Naive thymus-derived CD4-positive, alpha-beta T cell (primary cell): ENCODE measurements at regions of chr10 and their contacts with region 1.

Region 1: DNA sequence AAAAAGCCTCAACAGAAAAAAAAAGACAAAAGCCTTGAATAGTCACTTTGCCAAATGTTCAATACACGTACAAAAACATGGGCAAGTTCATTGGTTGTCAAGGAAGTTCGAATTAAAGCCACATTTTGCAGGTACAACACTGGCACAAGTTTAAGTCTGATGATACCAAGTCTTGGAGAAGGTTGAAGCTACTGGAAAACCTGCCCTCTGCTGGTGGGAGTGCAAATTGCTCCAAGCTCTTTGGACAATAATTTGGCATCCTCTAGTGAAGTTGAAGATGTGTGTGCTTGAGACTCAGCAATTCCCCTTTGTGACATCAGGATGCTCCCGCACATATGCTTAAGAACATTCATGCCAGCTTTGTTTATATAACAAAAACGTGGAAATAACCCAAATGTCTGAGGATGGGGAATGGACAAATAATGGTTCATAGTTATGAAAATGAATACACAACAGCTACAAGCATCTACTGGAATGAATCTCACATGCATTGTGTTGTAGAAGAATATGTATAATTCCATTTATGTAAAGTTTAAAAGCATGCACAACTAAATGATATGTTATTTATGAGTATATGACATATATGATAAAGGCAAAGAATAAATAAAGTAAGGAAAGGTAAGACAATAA is 120.0 kb upstream of the PLPP4 start:
- DNase-seq: peak in 6 of 9 donors; percentile 24 to 39 (median 28)
- ATAC-seq: peak; percentile 46
- H3K4me3 ChIP-seq: no peak overlapping the region
- H3K4me3 Mint-ChIP-seq: no peak overlapping the region
- H3K27ac ChIP-seq: no peak overlapping the region
- H3K27ac Mint-ChIP-seq: no peak overlapping the region
- H3K4me1 ChIP-seq: no peaks in the 10 kb centered on the region
- H3K4me1 Mint-ChIP-seq: no peaks in the 10 kb centered on the region
- H3K27me3 ChIP-seq: no peaks in the 10 kb centered on the region
- H3K27me3 Mint-ChIP-seq: peaks cover 6 to 25% (median 15%) of the 10 kb centered on the region in 5 donors

Region 2: DNA sequence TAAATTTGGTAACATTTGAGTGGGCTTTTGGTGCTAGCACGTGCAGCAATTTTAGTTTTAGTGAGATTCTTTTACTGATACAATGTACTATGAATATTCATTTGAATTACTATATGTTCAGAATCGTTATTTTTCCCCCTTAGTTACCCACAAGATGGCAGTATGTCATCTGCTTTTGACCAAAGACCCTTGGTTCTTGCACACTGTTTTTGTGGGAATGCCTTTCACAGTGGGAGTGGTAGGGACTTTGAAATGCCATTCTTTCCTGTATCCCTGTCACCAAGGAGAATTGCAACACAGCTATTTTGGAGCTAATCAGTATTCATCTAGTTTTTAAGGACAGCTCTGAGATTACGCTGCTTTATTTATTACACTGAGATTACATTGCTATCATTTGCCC is 403.8 kb before region 1 on chr10:
- CTCF ChIA-PET with region 1: no interaction called
- POLR2A ChIA-PET with region 1: no interaction called
- intact Hi-C with region 1: loop called in 1 of 2 experiments (anchors 2 kb)
- DNase-seq: no peak
- ATAC-seq: no peak
- H3K4me3 ChIP-seq: no peak overlapping the region
- H3K4me3 Mint-ChIP-seq: no peak overlapping the region
- H3K27ac ChIP-seq: no peak overlapping the region
- H3K27ac Mint-ChIP-seq: no peak overlapping the region
- H3K4me1 ChIP-seq: peaks cover 0 to 6% of the 10 kb centered on the region in 2 donors
- H3K4me1 Mint-ChIP-seq: peaks cover 4 to 24% (median 7%) of the 10 kb centered on the region in 7 donors
- H3K27me3 ChIP-seq: no peaks in the 10 kb centered on the region
- H3K27me3 Mint-ChIP-seq: no peaks in the 10 kb centered on the region

Region 3: GRCh38 chr10:120221873-120222485 is 115.0 kb before region 1 on chr10:
- CTCF ChIA-PET with region 1: no interaction called
- POLR2A ChIA-PET with region 1: no interaction called
- intact Hi-C with region 1: loop called in 1 of 2 experiments (anchors 10 kb)
- DNase-seq: no peak
- ATAC-seq: no peak
- H3K4me3 ChIP-seq: no peak overlapping the region
- H3K4me3 Mint-ChIP-seq: no peak overlapping the region
- H3K27ac ChIP-seq: no peak overlapping the region
- H3K27ac Mint-ChIP-seq: no peak overlapping the region
- H3K4me1 ChIP-seq: no peaks in the 10 kb centered on the region
- H3K4me1 Mint-ChIP-seq: no peaks in the 10 kb centered on the region
- H3K27me3 ChIP-seq: no peaks in the 10 kb centered on the region
- H3K27me3 Mint-ChIP-seq: peaks cover 0 to 30% (median 16%) of the 10 kb centered on the region in 5 donors